ENCODE measurements at regions of chr17 and their contacts with region 1.

Region 1: DNA sequence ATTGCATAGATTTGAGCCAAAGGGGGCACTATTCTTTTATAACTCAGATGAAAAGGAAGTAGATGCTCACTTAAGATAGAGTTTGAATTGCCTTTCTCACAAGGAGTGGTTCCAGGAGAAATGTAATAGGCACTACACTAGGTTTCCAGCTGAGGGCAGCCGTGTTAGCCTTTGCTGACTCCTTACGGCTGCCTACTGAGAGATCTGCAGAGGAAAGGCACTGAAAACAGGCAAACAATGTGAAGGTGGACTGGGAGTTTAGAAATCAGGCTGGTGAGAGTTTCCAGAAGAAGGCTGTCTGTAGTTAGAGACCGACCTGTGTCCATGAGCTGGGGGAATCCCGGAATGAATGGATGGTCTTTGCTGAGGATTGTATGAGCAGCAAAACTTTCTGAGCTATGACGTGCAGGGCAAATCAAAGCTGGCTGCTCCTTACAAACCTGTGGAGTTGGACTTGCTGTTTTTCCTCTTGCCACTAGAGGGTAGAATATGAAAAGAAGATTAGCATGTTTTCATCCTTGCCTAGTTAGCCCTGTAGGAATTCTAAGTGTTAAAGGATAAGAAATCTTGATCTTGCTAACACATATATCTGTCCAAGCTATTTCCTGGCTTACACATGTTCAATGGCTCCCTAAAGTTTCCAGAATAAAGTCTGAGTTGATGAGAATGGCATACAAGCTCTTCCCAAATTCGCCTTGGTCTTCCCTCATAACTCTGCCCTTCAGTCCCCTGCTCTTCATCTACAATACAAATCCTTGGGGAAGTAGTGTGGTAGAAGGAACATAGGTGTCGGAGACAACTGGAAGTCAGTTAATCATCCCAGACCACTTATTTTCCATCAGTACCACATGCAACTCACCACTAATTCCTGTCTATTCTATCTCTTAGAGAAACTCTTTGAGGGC is 20.1 kb upstream of the TAOK1 start:
- DNase-seq: peak; percentile 89 to 93
- ATAC-seq: peak; percentile 97 to 99
- H3K4me3 ChIP-seq: no peak overlapping the region; the same call in 2 of the 3 replicates
- H3K27ac ChIP-seq: peak overlapping the region; percentile 20 to 63; a peak in 4 of 6 replicates
- H3K4me1 ChIP-seq: peaks cover 14% of the 10 kb centered on the region
- CTCF ChIP-seq: peak; percentile 94
- EP300 ChIP-seq: no peak
- POLR2A ChIP-seq: no peak
- RAD21 ChIP-seq: peak; percentile 82 to 89

Region 2: GRCh38 chr17:29219378-29220047 is 150.6 kb before region 1 on chr17:
- CTCF ChIA-PET with region 1: interaction called, 10 read pairs
- POLR2A ChIA-PET with region 1: no interaction called
- DNase-seq: peak; percentile 86 to 97
- ATAC-seq: peak; percentile 97 to 99
- H3K4me3 ChIP-seq: no peak overlapping the region
- H3K27ac ChIP-seq: peak overlapping the region; percentile 5 to 67; a peak in 3 of 6 replicates
- H3K4me1 ChIP-seq: 0 out of 3 replicates have a peak, but pooled peaks cover 6% of the 10 kb centered on the region
- CTCF ChIP-seq: peak; percentile 99
- EP300 ChIP-seq: no peak
- POLR2A ChIP-seq: no peak
- RAD21 ChIP-seq: peak; percentile 87 to 94

Region 3: GRCh38 chr17:29389982-29390850 is 20.1 kb after region 1 on chr17 and contains the start of gene TAOK1:
- CTCF ChIA-PET with region 1: interaction called, 147 read pairs
- POLR2A ChIA-PET with region 1: interaction called, 17 read pairs
- DNase-seq: peak; percentile 95 to 99
- ATAC-seq: peak; percentile 93
- H3K4me3 ChIP-seq: peak within 1 kb of the TSS; percentile 79
- H3K27ac ChIP-seq: peak within 1 kb of the TSS; percentile 96 to 98
- H3K4me1 ChIP-seq: peaks cover 27% of the 10 kb centered on the region
- CTCF ChIP-seq: no peak
- EP300 ChIP-seq: no peak
- POLR2A ChIP-seq: peak; percentile 93
- RAD21 ChIP-seq: no peak; a peak in 1 of 5 replicates
- polyA plus RNA-seq, gene TAOK1: 46.7 and 47.1 TPM in 2 replicates

Region 4: GRCh38 chr17:29495011-29495410 is 124.9 kb after region 1 on chr17:
- CTCF ChIA-PET with region 1: interaction called, 15 read pairs
- POLR2A ChIA-PET with region 1: no interaction called
- DNase-seq: no peak
- ATAC-seq: peak in 1 of 2 experiments; percentile 42; a peak in 2 of 6 replicates
- H3K4me3 ChIP-seq: no peak overlapping the region
- H3K27ac ChIP-seq: no peak overlapping the region
- H3K4me1 ChIP-seq: peaks cover 9% of the 10 kb centered on the region; the same call in 1 of the 3 replicates
- CTCF ChIP-seq: no peak
- EP300 ChIP-seq: no peak
- POLR2A ChIP-seq: no peak
- RAD21 ChIP-seq: no peak

Region 5: DNA sequence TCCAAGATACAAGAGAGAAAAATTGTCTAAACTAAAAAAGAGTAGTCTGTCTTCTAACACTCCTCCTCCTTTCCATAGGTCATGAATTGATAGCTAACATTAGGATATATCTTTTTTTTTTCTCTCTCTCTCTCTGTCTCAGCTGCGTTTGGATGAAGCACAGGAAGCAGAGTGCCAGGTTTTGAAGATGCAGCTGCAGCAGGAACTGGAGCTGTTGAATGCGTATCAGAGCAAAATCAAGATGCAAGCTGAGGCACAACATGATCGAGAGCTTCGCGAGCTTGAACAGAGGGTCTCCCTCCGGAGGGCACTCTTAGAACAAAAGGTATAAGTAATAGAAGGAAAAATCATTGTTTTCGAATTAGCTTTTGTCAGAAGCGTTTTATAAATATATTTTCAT is 163.9 kb after region 1 on chr17:
- CTCF ChIA-PET with region 1: interaction called, 137 read pairs
- POLR2A ChIA-PET with region 1: interaction called, 5 read pairs
- DNase-seq: no peak
- ATAC-seq: no peak
- H3K4me3 ChIP-seq: no peak overlapping the region
- H3K27ac ChIP-seq: no peak overlapping the region
- H3K4me1 ChIP-seq: no peaks in the 10 kb centered on the region
- CTCF ChIP-seq: no peak
- EP300 ChIP-seq: no peak
- POLR2A ChIP-seq: no peak
- RAD21 ChIP-seq: no peak

Region 6: DNA sequence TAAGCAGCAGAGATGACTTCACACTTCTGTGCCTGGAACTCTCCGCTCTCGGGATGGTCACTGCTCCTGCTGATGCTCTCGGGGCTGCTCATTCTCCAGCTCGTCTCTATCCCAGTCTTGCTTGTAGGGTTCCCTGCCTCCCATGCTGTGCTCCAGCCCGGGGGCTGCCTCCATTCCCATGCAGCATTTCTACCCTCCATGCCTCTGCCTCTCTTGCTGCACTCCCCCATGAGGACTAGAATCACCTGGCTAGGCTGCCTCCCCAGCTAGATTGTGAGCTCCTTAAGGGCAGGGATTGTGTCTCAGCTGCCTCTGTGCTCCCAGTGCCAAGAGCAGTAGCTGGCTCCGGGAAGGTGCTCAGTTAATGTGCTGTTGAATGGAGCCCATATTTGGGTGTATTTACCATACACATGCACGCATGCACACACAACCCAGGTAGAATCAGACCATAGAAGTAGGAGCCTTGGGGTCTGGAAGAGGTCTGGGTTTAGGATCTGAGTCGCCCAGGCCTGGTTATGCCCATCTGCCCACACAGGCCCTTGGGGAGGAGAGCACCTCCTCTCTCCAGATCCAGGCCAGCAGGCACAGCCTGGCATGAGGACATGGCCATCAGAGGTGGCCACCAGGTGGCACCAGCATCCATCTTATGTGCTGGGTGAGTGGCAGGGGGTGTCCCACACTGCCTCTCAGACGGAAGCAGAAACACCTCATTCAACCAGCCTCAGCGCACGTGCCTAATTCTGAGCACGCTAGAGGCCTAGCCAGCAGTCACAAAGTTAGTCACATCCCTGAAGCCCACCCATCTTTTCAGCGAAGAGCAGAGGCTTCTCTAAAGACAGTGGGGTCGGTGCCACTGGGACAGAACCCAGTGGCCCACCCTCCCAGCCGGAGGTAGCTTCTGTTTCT is 210.0 kb after region 1 on chr17:
- CTCF ChIA-PET with region 1: interaction called, 36 read pairs
- POLR2A ChIA-PET with region 1: no interaction called
- DNase-seq: peak; percentile 91 to 99
- ATAC-seq: peak; percentile 87 to 96
- H3K4me3 ChIP-seq: no peak overlapping the region
- H3K27ac ChIP-seq: peak overlapping the region; percentile 41 to 72; a peak in 5 of 6 replicates
- H3K4me1 ChIP-seq: peaks cover 26% of the 10 kb centered on the region
- CTCF ChIP-seq: peak; percentile 98
- EP300 ChIP-seq: no peak
- POLR2A ChIP-seq: no peak
- RAD21 ChIP-seq: peak; percentile 95

Measured in A549 (cell line).